Left ventricle myocardium inferior (tissue), 1 donor: ENCODE measurements at regions of chr15 and their contacts with region 1.

Region 1: GRCh38 chr15:73573572-73573971 is 59.6 kb downstream of the NPTN start:
- DNase-seq: no peak
- H3K4me3 ChIP-seq: no peak overlapping the region
- H3K27ac ChIP-seq: peak overlapping the region; percentile 9
- H3K4me1 ChIP-seq: peaks cover 49% of the 10 kb centered on the region
- H3K27me3 ChIP-seq: no peaks in the 10 kb centered on the region
- CTCF ChIP-seq: no peak

Region 2: DNA sequence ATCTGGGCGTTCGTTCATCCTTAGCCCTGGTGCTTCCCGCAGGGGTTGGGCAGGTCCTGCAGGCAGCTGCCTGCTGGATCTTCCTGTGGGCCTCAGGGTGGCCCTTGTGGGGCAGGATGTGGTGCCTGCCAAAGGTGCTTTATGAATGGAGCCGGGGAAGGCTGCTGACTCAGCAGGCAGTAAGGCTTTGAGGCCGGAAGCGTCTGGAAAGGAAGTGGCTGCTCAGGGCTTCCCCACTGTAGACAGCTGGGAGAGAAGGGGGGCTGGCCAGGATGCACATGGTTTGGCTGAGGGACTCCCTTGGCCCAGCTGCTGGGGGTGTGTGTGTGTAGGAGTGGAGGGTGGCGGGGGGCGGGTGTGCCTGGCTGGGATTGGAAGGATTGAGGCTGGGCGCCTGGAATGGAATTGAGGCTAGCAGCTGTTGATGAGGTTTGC is 123.5 kb after region 1 on chr15:
- intact Hi-C with region 1: loop called (anchors 10 kb)
- DNase-seq: peak; percentile 86
- H3K4me3 ChIP-seq: no peak overlapping the region
- H3K27ac ChIP-seq: peak overlapping the region; percentile 43
- H3K4me1 ChIP-seq: peaks cover 54% of the 10 kb centered on the region
- H3K27me3 ChIP-seq: no peaks in the 10 kb centered on the region
- CTCF ChIP-seq: no peak